Transverse colon (tissue), 4 donors: ENCODE measurements at regions of chr11 and their contacts with region 1.

Region 1: GRCh38 chr11:67006139-67006884 is 16.6 kb upstream of the SYT12 start:
- DNase-seq: no peak
- H3K4me3 ChIP-seq: no peak overlapping the region
- H3K27ac ChIP-seq: no peak overlapping the region
- H3K4me1 ChIP-seq: no peaks in the 10 kb centered on the region
- H3K27me3 ChIP-seq: no peaks in the 10 kb centered on the region
- CTCF ChIP-seq: no peak
- EP300 ChIP-seq: no peak
- POLR2A ChIP-seq: no peak

Region 2: DNA sequence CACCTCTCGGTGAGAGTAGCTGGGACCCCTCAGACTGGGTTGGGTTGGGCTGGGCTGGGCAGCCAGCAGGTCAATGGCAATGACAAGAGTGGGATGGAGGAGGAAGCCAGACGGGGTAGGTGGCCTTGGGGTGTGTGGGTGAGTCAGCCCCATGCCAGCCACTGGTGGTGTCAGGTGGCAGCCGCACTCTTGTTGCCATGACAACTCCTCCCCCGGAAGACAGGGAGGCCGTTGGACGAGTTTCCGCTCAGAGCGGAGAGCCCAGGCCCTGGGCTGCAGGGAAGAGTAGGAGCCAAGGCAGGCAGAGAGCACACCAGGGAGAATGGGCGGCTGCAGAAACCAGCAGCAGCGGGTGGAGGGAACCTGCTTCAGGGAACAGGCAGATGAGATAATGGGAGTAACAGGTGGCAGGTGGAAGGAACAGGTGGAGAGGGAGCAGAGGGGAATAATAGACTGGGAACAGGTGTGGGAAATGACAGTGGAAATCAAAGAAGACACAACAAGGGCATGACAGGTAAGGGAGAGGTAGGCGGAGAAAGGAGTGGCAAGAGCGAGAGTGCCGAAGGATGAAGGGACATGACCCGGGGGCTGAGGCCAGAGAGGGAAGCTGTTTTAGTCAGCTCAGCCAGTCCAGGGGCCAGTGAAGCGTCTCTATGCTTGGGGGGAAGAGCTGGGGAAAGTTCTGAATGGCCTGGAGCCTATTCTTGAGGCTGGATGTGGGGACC is 285.9 kb before region 1 on chr11:
- in situ Hi-C with region 1: loop called in 1 of 4 experiments (anchors 25 kb)
- intact Hi-C with region 1: no loop called
- DNase-seq: peak; percentile 51
- H3K4me3 ChIP-seq: no peak overlapping the region
- H3K27ac ChIP-seq: peak overlapping the region in 1 of 4 donors; percentile 36
- H3K4me1 ChIP-seq: peaks cover 0 to 21% (median 10%) of the 10 kb centered on the region in 4 donors
- H3K27me3 ChIP-seq: peaks cover 7% of the 10 kb centered on the region
- CTCF ChIP-seq: no peak
- EP300 ChIP-seq: no peak
- POLR2A ChIP-seq: peak; percentile 11